ENCODE measurements at regions of chr2 and their contacts with region 1.

Region 1: GRCh38 chr2:169452080-169452479 is 27.2 kb upstream of the BBS5 start:
- DNase-seq: peak; percentile 71
- H3K4me3 ChIP-seq: no peak overlapping the region
- H3K27ac ChIP-seq: no peak overlapping the region
- H3K4me1 ChIP-seq: no peaks in the 10 kb centered on the region
- H3K27me3 ChIP-seq: no peaks in the 10 kb centered on the region
- CTCF ChIP-seq: peak; percentile 65

Region 2: GRCh38 chr2:169469952-169470572 is 18.0 kb after region 1 on chr2:
- CTCF ChIA-PET with region 1: no interaction called
- POLR2A ChIA-PET with region 1: no interaction called
- intact Hi-C with region 1: no loop called
- DNase-seq: no peak
- H3K4me3 ChIP-seq: no peak overlapping the region
- H3K27ac ChIP-seq: no peak overlapping the region
- H3K4me1 ChIP-seq: no peaks in the 10 kb centered on the region
- H3K27me3 ChIP-seq: no peaks in the 10 kb centered on the region
- CTCF ChIP-seq: no peak

Region 3: GRCh38 chr2:169768262-169768995 is 316.3 kb after region 1 on chr2:
- CTCF ChIA-PET with region 1: interaction called, 10 read pairs
- POLR2A ChIA-PET with region 1: no interaction called
- intact Hi-C with region 1: no loop called
- DNase-seq: no peak
- H3K4me3 ChIP-seq: no peak overlapping the region
- H3K27ac ChIP-seq: no peak overlapping the region
- H3K4me1 ChIP-seq: no peaks in the 10 kb centered on the region
- H3K27me3 ChIP-seq: no peaks in the 10 kb centered on the region
- CTCF ChIP-seq: no peak

Region 4: DNA sequence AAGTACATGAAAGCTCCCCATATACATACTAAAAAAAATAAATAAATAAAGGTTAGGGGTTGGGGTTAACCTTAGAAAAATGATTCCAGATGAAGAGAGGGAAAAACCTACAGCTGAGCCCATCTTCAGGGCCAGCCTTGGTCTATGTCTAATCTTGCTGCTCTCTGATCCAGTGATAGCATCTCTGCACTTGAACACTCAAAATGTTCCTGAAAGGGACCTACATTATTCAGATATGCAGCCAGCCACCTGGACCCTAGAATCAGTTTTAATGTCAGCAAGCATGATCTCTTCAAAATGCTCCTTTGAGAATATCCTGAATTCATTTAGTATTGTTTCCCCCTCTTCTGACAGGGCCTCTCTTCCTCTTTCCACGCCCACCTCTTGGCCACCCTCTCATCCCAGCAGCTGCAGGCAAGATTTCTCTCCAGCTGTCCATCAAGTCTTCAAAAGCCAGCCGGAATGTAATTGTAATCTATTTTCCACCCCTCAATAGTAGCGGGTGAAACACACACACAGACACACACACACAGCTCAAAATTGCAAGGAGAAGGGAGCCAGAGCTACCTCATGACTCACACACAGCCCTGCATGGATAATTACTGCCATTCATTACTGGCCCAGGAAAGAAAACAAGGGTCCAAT is 861.4 kb after region 1 on chr2:
- CTCF ChIA-PET with region 1: no interaction called
- POLR2A ChIA-PET with region 1: no interaction called
- intact Hi-C with region 1: no loop called
- DNase-seq: peak; percentile 81
- H3K4me3 ChIP-seq: no peak overlapping the region
- H3K27ac ChIP-seq: no peak overlapping the region
- H3K4me1 ChIP-seq: peaks cover 12% of the 10 kb centered on the region
- H3K27me3 ChIP-seq: no peaks in the 10 kb centered on the region
- CTCF ChIP-seq: no peak

Measured in A673 (cell line).